Psoas muscle (tissue), 8 donors: ENCODE measurements at regions of chr3 and their contacts with region 1.

Region 1: GRCh38 chr3:23324745-23325144 is 121.6 kb downstream of the UBE2E2 start:
- DNase-seq: no peak
- ATAC-seq: no peak
- H3K4me3 ChIP-seq: no peak overlapping the region
- H3K27ac ChIP-seq: no peak overlapping the region
- H3K4me1 ChIP-seq: peaks cover 15% of the 10 kb centered on the region
- H3K27me3 ChIP-seq: no peaks in the 10 kb centered on the region
- CTCF ChIP-seq: no peak

Region 2: DNA sequence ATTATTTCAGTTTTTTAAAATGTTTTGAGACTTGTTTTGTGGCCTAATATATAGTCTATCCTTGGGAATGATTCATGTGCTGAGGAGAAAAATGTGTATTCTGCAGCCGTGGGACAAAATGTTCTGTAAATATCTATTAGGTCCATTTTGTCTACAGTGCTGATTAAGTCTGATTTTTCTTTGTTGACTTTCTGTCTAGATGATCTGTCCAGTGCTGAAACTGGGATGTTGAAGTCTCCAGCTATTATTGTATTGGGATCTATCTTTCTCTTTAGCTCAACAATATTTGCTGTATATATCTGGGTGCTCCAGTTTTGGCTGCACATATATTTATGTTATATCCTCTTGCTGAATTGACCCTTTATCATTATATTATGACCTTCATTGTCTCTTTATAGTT is 36.5 kb before region 1 on chr3:
- intact Hi-C with region 1: no loop called
- DNase-seq: no peak
- ATAC-seq: no peak
- H3K4me3 ChIP-seq: no peak overlapping the region
- H3K27ac ChIP-seq: no peak overlapping the region
- H3K4me1 ChIP-seq: no peaks in the 10 kb centered on the region
- H3K27me3 ChIP-seq: no peaks in the 10 kb centered on the region
- CTCF ChIP-seq: no peak

Region 3: GRCh38 chr3:23389686-23390085 is 64.9 kb after region 1 on chr3:
- intact Hi-C with region 1: no loop called
- DNase-seq: no peak
- ATAC-seq: no peak
- H3K4me3 ChIP-seq: no peak overlapping the region
- H3K27ac ChIP-seq: no peak overlapping the region
- H3K4me1 ChIP-seq: peaks cover 54% of the 10 kb centered on the region
- H3K27me3 ChIP-seq: no peaks in the 10 kb centered on the region
- CTCF ChIP-seq: no peak

Region 4: DNA sequence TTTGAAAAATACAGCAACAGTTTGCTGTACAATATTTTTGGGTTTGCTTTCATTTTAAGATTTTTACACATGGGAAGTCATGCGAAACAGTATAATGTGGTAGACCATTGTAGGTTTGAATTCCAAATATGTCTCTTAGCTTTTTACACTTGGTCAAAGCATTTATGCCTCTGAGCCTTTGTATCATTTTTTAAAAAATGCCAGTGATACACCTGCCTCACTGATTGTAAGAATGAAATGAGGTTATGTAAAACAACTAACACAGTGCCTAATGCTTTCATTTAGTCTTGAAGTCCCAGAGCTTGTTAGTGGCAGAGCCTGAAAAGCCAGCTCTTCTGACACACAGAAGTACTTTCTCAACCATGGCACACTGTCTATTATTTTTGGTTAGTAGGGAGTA is 80.3 kb after region 1 on chr3:
- intact Hi-C with region 1: no loop called
- DNase-seq: no peak
- ATAC-seq: no peak
- H3K4me3 ChIP-seq: no peak overlapping the region
- H3K27ac ChIP-seq: no peak overlapping the region
- H3K4me1 ChIP-seq: peaks cover 38% of the 10 kb centered on the region
- H3K27me3 ChIP-seq: no peaks in the 10 kb centered on the region
- CTCF ChIP-seq: no peak

Region 5: GRCh38 chr3:23481561-23482278 is 157.0 kb after region 1 on chr3:
- intact Hi-C with region 1: loop called in 1 of 2 experiments (anchors 10 kb)
- DNase-seq: no peak
- ATAC-seq: no peak
- H3K4me3 ChIP-seq: no peak overlapping the region
- H3K27ac ChIP-seq: peak overlapping the region; percentile 1
- H3K4me1 ChIP-seq: peaks cover 19% of the 10 kb centered on the region
- H3K27me3 ChIP-seq: no peaks in the 10 kb centered on the region
- CTCF ChIP-seq: no peak